Activated CD4-positive, alpha-beta T cell treated with anti-CD3 and anti-CD28 coated beads, Interleukin-2, amount 10 ng/mL, durations not matched to agents 7 days and 5 days (primary cell): ENCODE measurements at regions of chr11 and their contacts with region 1.

Region 1: GRCh38 chr11:57324886-57325734 is at the start of gene TNKS1BP1:
- DNase-seq: peak; percentile 90
- H3K4me3 Mint-ChIP-seq: peak within 1 kb of the TSS; percentile 82
- H3K27ac Mint-ChIP-seq: peak within 1 kb of the TSS; percentile 94
- H3K4me1 Mint-ChIP-seq: peaks cover 54% of the 10 kb centered on the region
- H3K27me3 Mint-ChIP-seq: no peaks in the 10 kb centered on the region
- total RNA-seq, gene TNKS1BP1: 8.9 to 10.4 TPM

Region 2: DNA sequence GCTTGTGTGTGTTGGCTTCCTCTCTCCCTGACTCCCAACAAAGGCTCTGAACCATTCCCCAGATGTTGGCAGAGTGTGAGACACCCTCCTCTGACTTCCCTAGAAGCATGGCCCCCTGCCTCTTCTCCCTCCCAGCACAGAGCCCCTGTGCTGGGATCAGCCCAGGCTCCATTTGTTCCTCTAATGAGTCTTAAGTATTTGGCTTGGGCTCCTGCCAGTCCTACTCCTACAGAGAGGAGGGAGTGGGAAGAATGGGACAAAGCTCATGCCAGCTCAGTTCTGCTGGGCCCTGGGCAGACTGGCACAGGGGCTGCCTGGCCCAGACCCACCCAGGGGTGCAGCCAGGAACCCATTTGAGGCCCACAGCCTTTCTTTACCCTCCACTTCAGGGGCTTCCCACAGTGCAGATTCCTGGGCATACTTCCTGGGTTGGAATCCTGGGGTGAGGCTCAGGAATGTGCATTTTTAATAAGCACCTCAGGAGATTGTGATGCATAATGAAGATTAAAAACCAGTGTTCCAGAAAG is 30.4 kb before region 1 on chr11:
- CTCF ChIA-PET with region 1: no interaction called
- POLR2A ChIA-PET with region 1: no interaction called
- DNase-seq: no peak
- H3K4me3 Mint-ChIP-seq: no peak overlapping the region
- H3K27ac Mint-ChIP-seq: no peak overlapping the region
- H3K4me1 Mint-ChIP-seq: no peaks in the 10 kb centered on the region
- H3K27me3 Mint-ChIP-seq: peaks cover 9% of the 10 kb centered on the region

Region 3: DNA sequence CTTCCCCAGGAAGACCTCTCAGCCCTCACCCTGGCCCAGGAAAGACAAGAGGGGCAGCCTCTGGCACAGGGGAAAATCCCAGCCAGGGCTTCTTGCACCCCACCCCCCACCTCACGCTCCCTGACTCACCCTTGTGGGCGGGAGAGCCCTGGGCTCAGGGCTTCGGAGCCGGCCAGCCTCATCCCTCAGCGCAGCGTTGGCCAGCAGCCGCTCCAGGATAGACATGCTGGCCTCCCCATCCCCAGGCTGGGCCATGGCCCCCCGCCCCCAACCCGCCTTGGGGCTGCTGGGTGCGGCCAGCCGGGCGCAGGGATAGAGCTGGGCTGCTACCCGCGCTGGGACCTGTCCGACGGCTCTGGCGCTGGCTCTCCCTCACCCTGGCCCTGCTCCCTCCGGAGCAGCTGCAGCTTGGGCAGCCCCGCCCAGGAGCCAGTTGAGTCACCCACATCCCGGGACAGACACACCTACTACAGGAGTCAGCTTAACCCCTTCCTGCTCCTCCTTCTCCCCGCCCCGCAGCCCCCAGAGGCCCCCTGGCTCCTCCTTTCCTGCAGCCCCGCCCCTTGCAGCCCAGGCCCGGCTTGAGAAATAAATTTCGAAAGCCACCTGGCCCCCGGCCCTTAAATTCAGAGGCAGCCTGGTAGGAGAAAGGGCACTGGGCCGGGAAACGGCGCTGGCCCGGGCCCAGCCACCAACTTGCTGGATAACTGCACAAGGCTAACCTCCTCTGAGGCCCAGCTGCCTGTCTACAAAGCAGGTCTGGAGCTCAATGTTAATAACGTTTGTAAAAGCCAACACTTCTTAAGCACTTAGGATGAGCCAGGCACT is 13.8 kb before region 1 on chr11:
- CTCF ChIA-PET with region 1: interaction called, 10 read pairs
- POLR2A ChIA-PET with region 1: interaction called, 3 read pairs
- DNase-seq: peak; percentile 79
- H3K4me3 Mint-ChIP-seq: peak overlapping the region; percentile 68
- H3K27ac Mint-ChIP-seq: peak overlapping the region; percentile 71
- H3K4me1 Mint-ChIP-seq: peaks cover 19% of the 10 kb centered on the region
- H3K27me3 Mint-ChIP-seq: no peaks in the 10 kb centered on the region

Region 4: GRCh38 chr11:57335343-57336110 is 10.4 kb after region 1 on chr11 and contains the start of gene SSRP1:
- CTCF ChIA-PET with region 1: interaction called, 8 read pairs
- POLR2A ChIA-PET with region 1: interaction called, 11 read pairs
- DNase-seq: peak; percentile 90
- H3K4me3 Mint-ChIP-seq: peak within 1 kb of the TSS; percentile 89
- H3K27ac Mint-ChIP-seq: peak within 1 kb of the TSS; percentile 98
- H3K4me1 Mint-ChIP-seq: peaks cover 46% of the 10 kb centered on the region
- H3K27me3 Mint-ChIP-seq: peaks cover 5% of the 10 kb centered on the region
- total RNA-seq, gene SSRP1: 165 to 175 TPM